ENCODE measurements at regions of chr6 and their contacts with region 1.

Region 1: GRCh38 chr6:125956506-125957390 is at the start of gene HINT3:
- DNase-seq: peak; percentile 99
- ATAC-seq: peak; percentile 74
- H3K4me3 Mint-ChIP-seq: no peak within 1 kb of the TSS
- H3K27ac Mint-ChIP-seq: no peak within 1 kb of the TSS; the same call in none of the 2 replicates
- H3K4me1 Mint-ChIP-seq: peaks cover 4% of the 10 kb centered on the region; the same call in 1 of the 2 replicates
- H3K27me3 Mint-ChIP-seq: no peaks in the 10 kb centered on the region
- CTCF ChIP-seq: peak; percentile 88
- total RNA-seq, gene HINT3: 9.4 to 10.2 TPM (median 9.9 TPM) in 3 replicates

Region 2: DNA sequence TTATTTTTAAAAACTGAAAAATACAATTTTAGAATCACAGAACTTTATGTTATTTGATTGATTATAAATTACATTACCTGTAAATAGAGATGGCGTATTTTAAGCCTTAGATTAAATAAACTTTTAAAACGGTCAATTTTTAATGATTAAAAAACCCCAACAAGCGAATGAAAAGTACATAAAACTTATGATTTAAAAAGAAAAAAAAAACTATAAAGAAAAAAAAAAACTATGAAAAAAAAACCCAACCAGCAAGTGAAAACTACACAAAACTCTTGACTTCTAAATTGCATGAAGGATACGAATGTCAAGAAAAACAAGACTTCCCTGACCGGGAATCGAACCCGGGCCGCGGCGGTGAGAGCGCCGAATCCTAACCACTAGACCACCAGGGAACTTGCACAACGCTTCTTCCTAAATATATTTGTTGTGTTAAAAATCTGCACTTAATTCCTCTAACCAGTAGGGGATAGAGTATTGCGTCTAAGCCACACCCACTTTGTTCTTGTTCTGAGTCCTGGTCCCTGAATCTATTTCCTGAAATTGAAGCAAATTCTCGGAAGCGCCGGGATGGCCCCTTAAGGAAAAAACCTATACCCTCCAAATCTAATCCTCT is 176.7 kb before region 1 on chr6:
- CTCF ChIA-PET with region 1: interaction called, 15 read pairs
- POLR2A ChIA-PET with region 1: interaction called, 3 read pairs
- DNase-seq: peak; percentile 75
- ATAC-seq: peak; percentile 87
- H3K4me3 Mint-ChIP-seq: no peak overlapping the region
- H3K27ac Mint-ChIP-seq: no peak overlapping the region
- H3K4me1 Mint-ChIP-seq: peaks cover 12% of the 10 kb centered on the region
- H3K27me3 Mint-ChIP-seq: no peaks in the 10 kb centered on the region; the same call in 1 of the 2 replicates
- CTCF ChIP-seq: no peak

Region 3: DNA sequence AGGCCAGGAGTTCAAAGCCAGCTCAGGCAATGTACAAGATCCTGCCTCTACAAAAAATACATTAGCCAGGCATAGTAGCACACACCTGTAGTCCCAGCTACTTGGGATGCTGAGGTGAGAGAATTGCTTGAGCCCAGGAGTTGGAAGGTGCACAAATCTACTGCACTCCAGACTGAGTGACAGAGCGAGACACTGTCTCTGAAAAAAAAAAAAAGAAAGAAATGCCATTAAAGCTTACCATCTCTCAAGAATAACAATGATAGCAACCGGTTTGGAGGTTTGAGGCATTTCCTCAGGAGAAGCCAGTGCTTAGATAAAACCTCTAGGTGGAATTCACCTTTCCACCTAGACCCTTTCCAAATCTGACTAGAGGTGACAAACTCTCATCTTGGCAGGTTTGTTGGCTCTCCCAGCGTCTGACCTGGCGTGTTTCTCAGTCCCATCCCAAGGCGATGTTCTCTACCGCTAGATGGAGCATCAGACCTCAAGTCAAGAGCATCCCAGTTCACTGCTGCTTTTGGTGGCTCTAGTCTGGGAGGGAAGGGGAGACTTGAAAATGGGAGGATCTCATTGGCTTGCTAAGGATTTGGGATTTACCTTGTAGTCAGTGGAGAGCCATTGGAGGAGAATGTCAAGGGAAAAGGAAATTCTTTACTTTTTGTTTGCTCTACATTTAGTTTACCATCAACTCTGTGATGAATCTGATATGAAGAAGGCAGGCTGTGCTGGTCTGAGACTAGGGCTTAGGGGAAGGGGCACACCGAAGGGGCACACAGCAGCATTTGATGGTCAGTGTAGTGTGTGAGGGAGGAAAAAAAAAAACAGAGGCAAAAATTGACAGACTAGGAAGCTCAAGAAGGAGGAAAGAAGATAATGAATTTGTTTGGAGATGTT is 98.1 kb before region 1 on chr6:
- CTCF ChIA-PET with region 1: interaction called, 19 read pairs
- POLR2A ChIA-PET with region 1: no interaction called
- DNase-seq: peak; percentile 75
- ATAC-seq: peak; percentile 100
- H3K4me3 Mint-ChIP-seq: no peak overlapping the region
- H3K27ac Mint-ChIP-seq: 0 out of 2 replicates have a peak overlapping the region, but pooled peaks have one; percentile 21
- H3K4me1 Mint-ChIP-seq: peaks cover 2% of the 10 kb centered on the region; the same call in 1 of the 2 replicates
- H3K27me3 Mint-ChIP-seq: no peaks in the 10 kb centered on the region
- CTCF ChIP-seq: peak; percentile 44; the same call in 1 of the 2 replicates

Region 4: GRCh38 chr6:125899726-125900182 is 57.0 kb before region 1 on chr6:
- CTCF ChIA-PET with region 1: interaction called, 24 read pairs
- POLR2A ChIA-PET with region 1: no interaction called
- DNase-seq: no peak
- ATAC-seq: peak; percentile 99
- H3K4me3 Mint-ChIP-seq: no peak overlapping the region
- H3K27ac Mint-ChIP-seq: no peak overlapping the region
- H3K4me1 Mint-ChIP-seq: peaks cover 10% of the 10 kb centered on the region
- H3K27me3 Mint-ChIP-seq: no peaks in the 10 kb centered on the region
- CTCF ChIP-seq: no peak

Region 5: GRCh38 chr6:125974214-125974866 is 17.6 kb after region 1 on chr6:
- CTCF ChIA-PET with region 1: interaction called, 14 read pairs
- POLR2A ChIA-PET with region 1: no interaction called
- DNase-seq: no peak
- ATAC-seq: no peak
- H3K4me3 Mint-ChIP-seq: no peak overlapping the region
- H3K27ac Mint-ChIP-seq: no peak overlapping the region
- H3K4me1 Mint-ChIP-seq: no peaks in the 10 kb centered on the region
- H3K27me3 Mint-ChIP-seq: no peaks in the 10 kb centered on the region
- CTCF ChIP-seq: no peak; the same call in 1 of the 2 replicates

Region 6: GRCh38 chr6:126002755-126003679 is 46.3 kb after region 1 on chr6:
- CTCF ChIA-PET with region 1: no interaction called
- POLR2A ChIA-PET with region 1: no interaction called
- DNase-seq: no peak
- ATAC-seq: no peak
- H3K4me3 Mint-ChIP-seq: no peak overlapping the region
- H3K27ac Mint-ChIP-seq: no peak overlapping the region
- H3K4me1 Mint-ChIP-seq: no peaks in the 10 kb centered on the region
- H3K27me3 Mint-ChIP-seq: no peaks in the 10 kb centered on the region
- CTCF ChIP-seq: no peak